H1 (cell line): ENCODE measurements at regions of chr19 and their contacts with region 1.

Region 1: GRCh38 chr19:5622463-5623396 is at the starts of genes SAFB and SAFB2:
- DNase-seq: peak; percentile 98 to 100
- H3K4me3 ChIP-seq: peak within 1 kb of the TSS; percentile 88 to 100 (median 98)
- H3K27ac ChIP-seq: peak within 1 kb of the TSS; percentile 97
- H3K4me1 ChIP-seq: peaks cover 2 to 14% (median 6%) of the 10 kb centered on the region in 4 experiments; a peak in 4 of 7 replicates
- H3K27me3 ChIP-seq: no peaks in the 10 kb centered on the region
- CTCF ChIP-seq: no peak
- EP300 ChIP-seq: no peak
- POLR2A ChIP-seq: peak; percentile 61 to 86; a peak in 2 of 3 replicates
- RAD21 ChIP-seq: no peak
- total RNA-seq, gene SAFB: 109 and 110 TPM in 2 replicates
- total RNA-seq, gene SAFB2: 63.8 and 74.4 TPM in 2 replicates

Region 2: DNA sequence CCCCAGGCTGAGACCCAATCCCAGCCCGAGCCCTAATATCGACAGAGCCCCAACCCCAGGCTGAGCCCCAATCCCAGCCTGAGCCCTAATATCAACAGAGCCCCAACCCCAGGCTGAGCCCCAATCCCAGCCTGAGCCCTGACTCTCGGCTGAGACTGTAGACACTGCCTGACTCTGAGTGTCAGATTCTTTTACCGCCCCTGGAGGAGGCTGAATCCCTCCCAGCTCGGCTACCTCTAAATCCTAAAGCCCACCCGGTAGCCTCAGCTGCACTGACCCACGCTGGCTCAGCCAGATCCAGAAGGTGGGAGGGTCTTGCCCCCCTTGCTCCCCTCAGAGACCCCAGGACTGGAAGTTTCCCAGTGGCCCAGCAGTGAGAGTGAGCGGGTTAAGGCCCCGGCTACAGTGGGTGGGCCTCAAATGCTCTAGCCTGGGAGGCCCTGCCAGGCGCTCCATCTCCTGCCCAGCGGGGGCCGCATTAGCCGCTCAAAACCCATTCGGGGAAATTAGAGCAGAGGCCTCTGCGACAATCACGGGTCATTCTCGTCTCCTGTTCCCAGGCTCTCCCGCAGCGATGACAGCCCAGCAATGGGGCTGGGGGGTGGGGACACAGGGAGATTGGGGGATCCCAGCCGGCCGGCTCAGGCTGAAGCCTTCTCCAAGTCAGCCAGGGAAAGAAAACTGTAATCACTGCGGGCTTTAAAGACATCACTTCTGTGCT is 123.7 kb before region 1 on chr19:
- CTCF ChIA-PET with region 1: no interaction called
- POLR2A ChIA-PET with region 1: no interaction called
- DNase-seq: peak; percentile 67 to 88
- H3K4me3 ChIP-seq: peak overlapping the region in 1 of 4 experiments; percentile 15; a peak in 1 of 8 replicates
- H3K27ac ChIP-seq: no peak overlapping the region
- H3K4me1 ChIP-seq: peaks cover 0 to 3% (median 1%) of the 10 kb centered on the region in 4 experiments; a peak in 5 of 7 replicates
- H3K27me3 ChIP-seq: peaks cover 29 to 60% (median 56%) of the 10 kb centered on the region in 4 experiments
- CTCF ChIP-seq: no peak
- EP300 ChIP-seq: peak in 1 of 2 experiments; percentile 61; a peak in 1 of 3 replicates
- POLR2A ChIP-seq: no peak
- RAD21 ChIP-seq: no peak; a peak in 1 of 4 replicates

Region 3: GRCh38 chr19:5585461-5586299 is 37.0 kb before region 1 on chr19:
- CTCF ChIA-PET with region 1: interaction called, 3 read pairs
- POLR2A ChIA-PET with region 1: interaction called, 14 read pairs
- DNase-seq: peak in 1 of 2 experiments; percentile 85
- H3K4me3 ChIP-seq: peak overlapping the region in 3 of 4 experiments; percentile 6 to 52 (median 24); a peak in 4 of 8 replicates
- H3K27ac ChIP-seq: no peak overlapping the region; the same call in 1 of the 2 replicates
- H3K4me1 ChIP-seq: peaks cover 0 to 21% (median 16%) of the 10 kb centered on the region in 4 experiments; a peak in 6 of 7 replicates
- H3K27me3 ChIP-seq: no peaks in the 10 kb centered on the region
- CTCF ChIP-seq: no peak
- EP300 ChIP-seq: no peak
- POLR2A ChIP-seq: no peak
- RAD21 ChIP-seq: no peak

Region 4: GRCh38 chr19:5665796-5666513 is 43.2 kb after region 1 on chr19:
- CTCF ChIA-PET with region 1: interaction called, 5 read pairs
- POLR2A ChIA-PET with region 1: interaction called, 12 read pairs
- DNase-seq: no peak
- H3K4me3 ChIP-seq: no peak overlapping the region
- H3K27ac ChIP-seq: no peak overlapping the region
- H3K4me1 ChIP-seq: peaks cover 0 to 9% (median 5%) of the 10 kb centered on the region in 4 experiments; a peak in 5 of 7 replicates
- H3K27me3 ChIP-seq: no peaks in the 10 kb centered on the region
- CTCF ChIP-seq: peak in 1 of 3 experiments; percentile 15; a peak in 1 of 4 replicates
- EP300 ChIP-seq: no peak
- POLR2A ChIP-seq: no peak
- RAD21 ChIP-seq: no peak